B cell (primary cell): ENCODE measurements at regions of chr7 and their contacts with region 1.

Region 1: GRCh38 chr7:726084-726853 is at the start of gene DNAAF5:
- DNase-seq: peak; percentile 91
- ATAC-seq: peak; percentile 89
- H3K4me3 ChIP-seq: peak within 1 kb of the TSS; percentile 35 to 87 (median 66)
- H3K4me3 Mint-ChIP-seq: peak within 1 kb of the TSS; percentile 86
- H3K27ac ChIP-seq: peak within 1 kb of the TSS; percentile 29 to 76
- H3K27ac Mint-ChIP-seq: peak within 1 kb of the TSS; percentile 85
- H3K4me1 ChIP-seq: peaks cover 16 to 21% of the 10 kb centered on the region in 2 donors
- H3K4me1 Mint-ChIP-seq: peaks cover 25% of the 10 kb centered on the region
- H3K27me3 ChIP-seq: no peaks in the 10 kb centered on the region
- H3K27me3 Mint-ChIP-seq: no peaks in the 10 kb centered on the region
- CTCF ChIP-seq: no peak
- total RNA-seq, gene DNAAF5: 21.4 and 25.8 TPM in 2 replicates

Region 2: DNA sequence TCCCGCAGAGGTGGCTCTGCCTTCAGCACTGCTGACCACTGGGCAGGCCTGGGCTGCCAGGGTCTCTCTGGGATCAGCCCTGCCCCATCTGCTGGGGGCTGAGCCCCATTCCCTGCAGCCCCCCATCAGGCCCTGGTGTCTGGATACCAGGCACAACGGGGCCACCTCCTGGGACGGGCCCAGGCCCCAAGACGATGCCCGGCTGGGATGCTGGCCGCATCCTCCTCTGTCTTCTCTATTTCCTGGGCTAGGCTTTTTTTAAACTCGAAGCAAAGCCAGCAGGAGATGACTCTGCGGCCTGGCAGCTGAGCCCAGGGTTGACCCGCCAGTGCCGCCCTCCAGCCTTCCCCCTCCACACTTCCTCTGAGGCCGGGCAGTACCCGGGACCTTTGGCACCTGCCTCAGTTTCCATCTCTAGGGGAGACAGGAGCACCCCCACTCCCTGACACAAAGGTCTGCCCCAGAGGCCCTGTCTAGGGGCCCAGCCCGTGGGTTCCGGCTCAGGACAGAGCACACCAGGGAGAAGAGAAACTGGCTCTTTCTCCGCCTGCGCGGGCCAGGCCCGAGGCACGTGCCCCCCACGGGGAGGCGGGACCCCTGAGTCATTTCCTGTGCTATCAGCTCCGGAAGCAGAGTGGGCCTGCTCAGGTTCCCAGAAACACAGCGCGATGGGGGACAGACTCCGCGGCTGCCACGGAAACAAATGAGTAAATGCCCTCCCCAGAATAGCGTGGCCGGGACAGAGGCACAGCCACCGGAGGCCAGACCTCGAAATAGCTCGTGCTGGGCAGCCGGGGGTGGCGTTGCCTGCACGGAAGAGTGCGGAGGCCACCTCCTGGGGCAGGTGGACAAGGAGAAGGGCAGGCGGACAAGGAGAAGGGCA is 122.0 kb before region 1 on chr7:
- CTCF ChIA-PET with region 1: no interaction called
- POLR2A ChIA-PET with region 1: no interaction called
- intact Hi-C with region 1: loop called (anchors 1 kb)
- DNase-seq: peak; percentile 92
- ATAC-seq: peak; percentile 73
- H3K4me3 ChIP-seq: peak overlapping the region in 4 of 5 experiments; percentile 40 to 54 (median 48)
- H3K4me3 Mint-ChIP-seq: peak overlapping the region; percentile 91
- H3K27ac ChIP-seq: peak overlapping the region; percentile 93 to 95
- H3K27ac Mint-ChIP-seq: peak overlapping the region; percentile 98
- H3K4me1 ChIP-seq: peaks cover 33 to 52% of the 10 kb centered on the region in 2 donors
- H3K4me1 Mint-ChIP-seq: peaks cover 46% of the 10 kb centered on the region
- H3K27me3 ChIP-seq: no peaks in the 10 kb centered on the region
- H3K27me3 Mint-ChIP-seq: no peaks in the 10 kb centered on the region
- CTCF ChIP-seq: no peak

Region 3: GRCh38 chr7:816300-816750 is 90.1 kb after region 1 on chr7:
- CTCF ChIA-PET with region 1: no interaction called
- POLR2A ChIA-PET with region 1: no interaction called
- intact Hi-C with region 1: loop called (anchors 10 kb)
- DNase-seq: peak; percentile 97
- ATAC-seq: peak; percentile 92
- H3K4me3 ChIP-seq: peak overlapping the region in 4 of 5 experiments; percentile 49 to 71 (median 66)
- H3K4me3 Mint-ChIP-seq: peak overlapping the region; percentile 86
- H3K27ac ChIP-seq: no peak overlapping the region
- H3K27ac Mint-ChIP-seq: peak overlapping the region; percentile 73
- H3K4me1 ChIP-seq: peaks cover 29 to 43% of the 10 kb centered on the region in 2 donors
- H3K4me1 Mint-ChIP-seq: peaks cover 58% of the 10 kb centered on the region
- H3K27me3 ChIP-seq: no peaks in the 10 kb centered on the region
- H3K27me3 Mint-ChIP-seq: no peaks in the 10 kb centered on the region
- CTCF ChIP-seq: no peak

Region 4: DNA sequence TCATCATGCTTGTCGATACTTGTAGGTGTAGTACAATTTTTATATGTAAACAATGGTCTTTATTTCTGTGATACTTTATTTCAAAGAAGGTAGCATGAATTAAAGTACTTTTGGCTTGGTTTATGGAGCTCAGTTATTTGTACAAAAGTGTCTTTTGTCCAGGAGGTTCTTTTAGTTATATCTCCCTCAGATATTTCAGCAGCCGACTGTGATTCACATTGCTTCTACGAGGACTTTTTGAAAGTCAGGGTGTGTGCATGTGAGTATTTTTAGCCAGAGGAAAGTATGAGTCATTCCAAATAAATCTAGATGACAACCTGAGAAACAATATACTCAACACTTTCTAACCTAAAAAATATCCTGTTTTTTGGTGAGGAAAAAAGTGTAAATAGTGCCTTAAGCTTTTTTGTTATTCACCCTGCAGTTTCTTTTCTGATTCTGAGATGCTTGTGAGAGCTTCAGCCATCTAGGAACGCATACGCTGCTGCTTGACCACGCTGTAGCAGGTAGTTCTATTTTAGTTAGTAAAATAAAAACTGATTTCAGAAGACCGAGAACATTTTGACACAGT is 105.4 kb after region 1 on chr7:
- CTCF ChIA-PET with region 1: no interaction called
- POLR2A ChIA-PET with region 1: no interaction called
- intact Hi-C with region 1: loop called (anchors 1 kb)
- DNase-seq: no peak
- ATAC-seq: peak; percentile 67
- H3K4me3 ChIP-seq: peak overlapping the region in 2 of 5 experiments; percentile 14 to 16
- H3K4me3 Mint-ChIP-seq: peak overlapping the region; percentile 85
- H3K27ac ChIP-seq: peak overlapping the region; percentile 76 to 89
- H3K27ac Mint-ChIP-seq: peak overlapping the region; percentile 93
- H3K4me1 ChIP-seq: peaks cover 31 to 32% of the 10 kb centered on the region in 2 donors
- H3K4me1 Mint-ChIP-seq: peaks cover 51% of the 10 kb centered on the region
- H3K27me3 ChIP-seq: no peaks in the 10 kb centered on the region
- H3K27me3 Mint-ChIP-seq: no peaks in the 10 kb centered on the region
- CTCF ChIP-seq: no peak